HCT116 (cell line): ENCODE measurements at regions of chr16 and their contacts with region 1.

Region 1: GRCh38 chr16:19959736-19960135 is 75.1 kb upstream of the GPRC5B start:
- DNase-seq: no peak
- ATAC-seq: no peak
- H3K4me3 ChIP-seq: no peak overlapping the region
- H3K27ac ChIP-seq: no peak overlapping the region
- H3K4me1 ChIP-seq: no peaks in the 10 kb centered on the region
- H3K27me3 ChIP-seq: peaks cover 29% of the 10 kb centered on the region
- CTCF ChIP-seq: no peak
- POLR2A ChIP-seq: no peak
- RAD21 ChIP-seq: no peak

Region 2: DNA sequence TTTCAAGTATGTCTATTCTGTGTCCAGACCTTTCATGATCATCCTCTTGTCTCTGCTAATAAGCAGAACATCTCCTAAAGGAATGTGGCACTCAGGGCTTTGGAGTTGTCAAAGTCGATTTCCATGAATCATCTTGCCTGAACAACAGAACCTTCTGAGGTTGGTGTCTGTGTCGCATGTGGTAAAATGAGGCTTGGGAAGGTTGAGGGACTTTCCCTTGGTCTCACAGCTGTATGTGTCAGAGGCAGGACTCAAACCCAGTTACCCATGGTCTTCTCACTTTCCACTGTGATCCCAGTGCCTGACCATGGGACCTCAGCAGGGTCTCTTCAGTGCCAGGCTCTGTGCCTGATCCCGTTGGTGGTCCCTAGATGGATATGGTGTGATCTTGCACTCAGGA is 70.9 kb before region 1 on chr16:
- CTCF ChIA-PET with region 1: no interaction called
- POLR2A ChIA-PET with region 1: no interaction called
- RAD21 ChIA-PET with region 1: no interaction called
- intact Hi-C with region 1: no loop called
- DNase-seq: no peak
- ATAC-seq: no peak
- H3K4me3 ChIP-seq: no peak overlapping the region
- H3K27ac ChIP-seq: no peak overlapping the region
- H3K4me1 ChIP-seq: peaks cover 3 to 15% of the 10 kb centered on the region in 2 experiments; a peak in 3 of 4 replicates
- H3K27me3 ChIP-seq: no peaks in the 10 kb centered on the region
- CTCF ChIP-seq: no peak
- POLR2A ChIP-seq: no peak
- RAD21 ChIP-seq: no peak

Region 3: DNA sequence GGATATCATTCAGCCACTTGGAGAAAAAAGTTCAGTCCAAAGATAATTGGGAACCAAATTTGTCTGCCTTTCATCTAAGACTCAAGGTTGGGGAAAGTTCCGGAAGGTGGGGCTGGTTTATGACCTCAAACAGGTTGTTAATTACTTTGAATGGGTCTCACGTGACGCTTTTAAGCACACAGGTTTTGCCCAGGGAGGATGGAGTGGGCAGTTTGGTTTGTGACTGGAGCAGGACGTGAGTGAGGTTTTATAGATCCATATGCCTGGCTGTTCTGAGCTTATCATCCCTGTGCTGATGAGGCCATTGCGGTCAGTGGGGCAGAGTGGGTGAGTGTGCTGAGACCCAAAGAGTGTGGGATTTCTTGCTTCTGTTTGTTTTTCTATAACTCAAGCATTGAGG is 36.3 kb before region 1 on chr16:
- CTCF ChIA-PET with region 1: no interaction called
- POLR2A ChIA-PET with region 1: no interaction called
- RAD21 ChIA-PET with region 1: no interaction called
- intact Hi-C with region 1: loop called (anchors 5 kb)
- DNase-seq: no peak
- ATAC-seq: no peak
- H3K4me3 ChIP-seq: no peak overlapping the region
- H3K27ac ChIP-seq: no peak overlapping the region
- H3K4me1 ChIP-seq: peaks cover 8 to 14% of the 10 kb centered on the region in 2 experiments
- H3K27me3 ChIP-seq: no peaks in the 10 kb centered on the region
- CTCF ChIP-seq: no peak
- POLR2A ChIP-seq: no peak
- RAD21 ChIP-seq: no peak

Region 4: GRCh38 chr16:19933740-19934139 is 26.0 kb before region 1 on chr16:
- CTCF ChIA-PET with region 1: no interaction called
- POLR2A ChIA-PET with region 1: no interaction called
- RAD21 ChIA-PET with region 1: no interaction called
- intact Hi-C with region 1: loop called (anchors 1 kb)
- DNase-seq: no peak
- ATAC-seq: no peak
- H3K4me3 ChIP-seq: no peak overlapping the region
- H3K27ac ChIP-seq: no peak overlapping the region
- H3K4me1 ChIP-seq: no peaks in the 10 kb centered on the region
- H3K27me3 ChIP-seq: 0 out of 2 replicates have a peak, but pooled peaks cover 4% of the 10 kb centered on the region
- CTCF ChIP-seq: no peak
- POLR2A ChIP-seq: no peak
- RAD21 ChIP-seq: no peak

Region 5: GRCh38 chr16:20073203-20074098 is 113.7 kb after region 1 on chr16 and contains the start of gene GPR139:
- CTCF ChIA-PET with region 1: no interaction called
- POLR2A ChIA-PET with region 1: no interaction called
- RAD21 ChIA-PET with region 1: no interaction called
- intact Hi-C with region 1: no loop called
- DNase-seq: no peak
- ATAC-seq: no peak
- H3K4me3 ChIP-seq: no peak within 1 kb of the TSS
- H3K27ac ChIP-seq: no peak within 1 kb of the TSS
- H3K4me1 ChIP-seq: no peaks in the 10 kb centered on the region
- H3K27me3 ChIP-seq: peaks cover 52% of the 10 kb centered on the region
- CTCF ChIP-seq: no peak
- POLR2A ChIP-seq: no peak
- RAD21 ChIP-seq: no peak
- total RNA-seq, gene GPR139: not detected